ENCODE measurements at regions of chr2 and their contacts with region 1.

Region 1: DNA sequence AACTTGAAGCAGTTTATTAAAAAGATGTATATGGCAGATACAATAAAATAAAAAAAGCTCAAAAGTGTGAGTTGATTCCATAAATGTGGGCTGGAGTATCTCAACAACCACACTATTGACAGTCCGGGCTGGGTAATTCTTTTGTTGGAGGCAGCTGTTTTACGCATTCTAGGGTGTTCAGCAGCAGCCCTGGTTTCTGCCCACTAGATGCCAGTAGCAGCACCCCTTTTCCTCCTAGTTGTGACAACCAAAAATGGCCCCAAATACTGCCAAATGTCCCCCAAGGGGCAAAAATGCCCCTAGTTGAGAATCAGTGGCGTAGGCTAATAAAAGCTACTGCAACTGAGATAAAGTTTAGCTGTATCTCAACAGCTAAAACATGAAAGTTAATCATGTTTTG is 44.8 kb downstream of the CHMP3 start:
- DNase-seq: peak; percentile 50
- H3K4me3 Mint-ChIP-seq: no peak overlapping the region
- H3K27ac Mint-ChIP-seq: no peak overlapping the region
- H3K4me1 Mint-ChIP-seq: no peaks in the 10 kb centered on the region
- H3K27me3 Mint-ChIP-seq: no peaks in the 10 kb centered on the region

Region 2: DNA sequence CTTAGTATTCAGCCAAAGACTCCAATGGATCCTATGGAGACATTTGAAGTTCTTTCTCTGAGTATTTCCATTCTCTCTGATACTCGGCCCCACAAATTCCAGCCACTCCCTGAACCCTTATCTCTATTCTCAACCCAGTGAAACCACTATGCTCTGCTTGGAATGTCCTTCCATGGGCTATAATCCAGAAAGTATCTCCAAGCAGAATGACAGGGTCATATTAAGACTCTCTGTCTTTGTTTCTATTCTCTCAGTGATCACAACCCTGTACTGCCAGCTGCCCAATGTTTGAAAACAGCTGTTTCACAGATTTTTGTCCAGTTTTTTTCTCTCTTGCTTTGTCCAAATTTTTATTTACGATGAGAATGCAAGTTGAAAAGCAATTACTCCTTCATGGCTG is 22.9 kb after region 1 on chr2:
- CTCF ChIA-PET with region 1: no interaction called
- intact Hi-C with region 1: no loop called
- DNase-seq: no peak
- H3K4me3 Mint-ChIP-seq: no peak overlapping the region
- H3K27ac Mint-ChIP-seq: no peak overlapping the region
- H3K4me1 Mint-ChIP-seq: peaks cover 16% of the 10 kb centered on the region
- H3K27me3 Mint-ChIP-seq: no peaks in the 10 kb centered on the region

Region 3: GRCh38 chr2:86566158-86566820 is 47.8 kb after region 1 on chr2:
- CTCF ChIA-PET with region 1: no interaction called
- intact Hi-C with region 1: no loop called
- DNase-seq: no peak
- H3K4me3 Mint-ChIP-seq: no peak overlapping the region
- H3K27ac Mint-ChIP-seq: no peak overlapping the region
- H3K4me1 Mint-ChIP-seq: peaks cover 18% of the 10 kb centered on the region
- H3K27me3 Mint-ChIP-seq: no peaks in the 10 kb centered on the region

Region 4: DNA sequence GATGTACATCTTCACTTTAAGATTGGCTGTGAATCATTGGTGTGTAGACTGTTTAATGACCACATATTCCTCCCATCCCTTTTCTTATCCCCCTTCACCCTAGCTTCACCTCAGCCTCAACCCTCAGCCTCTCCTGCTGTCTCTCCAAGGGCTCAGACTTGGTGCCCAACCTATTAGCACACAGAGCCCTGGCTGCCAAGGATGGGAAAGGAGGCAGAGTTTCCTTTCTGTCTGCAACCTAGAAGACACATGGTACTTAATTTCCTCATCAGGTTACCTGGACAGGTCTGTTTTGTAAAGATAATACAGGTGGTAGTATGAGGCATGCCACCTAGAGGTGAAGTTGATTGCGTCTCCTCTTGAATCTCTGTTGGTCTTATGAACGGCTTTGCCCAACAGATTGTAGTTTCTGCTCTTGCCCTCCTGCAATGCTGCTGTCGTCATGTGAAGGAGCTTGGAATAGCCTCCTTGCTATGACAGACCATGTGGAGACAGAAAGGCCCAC is 157.1 kb after region 1 on chr2:
- CTCF ChIA-PET with region 1: no interaction called
- intact Hi-C with region 1: loop called (anchors 2 kb)
- DNase-seq: no peak
- H3K4me3 Mint-ChIP-seq: no peak overlapping the region
- H3K27ac Mint-ChIP-seq: no peak overlapping the region
- H3K4me1 Mint-ChIP-seq: no peaks in the 10 kb centered on the region
- H3K27me3 Mint-ChIP-seq: no peaks in the 10 kb centered on the region

Region 5: GRCh38 chr2:86686905-86687304 is 168.4 kb after region 1 on chr2:
- CTCF ChIA-PET with region 1: no interaction called
- intact Hi-C with region 1: no loop called
- DNase-seq: no peak
- H3K4me3 Mint-ChIP-seq: no peak overlapping the region
- H3K27ac Mint-ChIP-seq: no peak overlapping the region
- H3K4me1 Mint-ChIP-seq: no peaks in the 10 kb centered on the region
- H3K27me3 Mint-ChIP-seq: no peaks in the 10 kb centered on the region

Region 6: DNA sequence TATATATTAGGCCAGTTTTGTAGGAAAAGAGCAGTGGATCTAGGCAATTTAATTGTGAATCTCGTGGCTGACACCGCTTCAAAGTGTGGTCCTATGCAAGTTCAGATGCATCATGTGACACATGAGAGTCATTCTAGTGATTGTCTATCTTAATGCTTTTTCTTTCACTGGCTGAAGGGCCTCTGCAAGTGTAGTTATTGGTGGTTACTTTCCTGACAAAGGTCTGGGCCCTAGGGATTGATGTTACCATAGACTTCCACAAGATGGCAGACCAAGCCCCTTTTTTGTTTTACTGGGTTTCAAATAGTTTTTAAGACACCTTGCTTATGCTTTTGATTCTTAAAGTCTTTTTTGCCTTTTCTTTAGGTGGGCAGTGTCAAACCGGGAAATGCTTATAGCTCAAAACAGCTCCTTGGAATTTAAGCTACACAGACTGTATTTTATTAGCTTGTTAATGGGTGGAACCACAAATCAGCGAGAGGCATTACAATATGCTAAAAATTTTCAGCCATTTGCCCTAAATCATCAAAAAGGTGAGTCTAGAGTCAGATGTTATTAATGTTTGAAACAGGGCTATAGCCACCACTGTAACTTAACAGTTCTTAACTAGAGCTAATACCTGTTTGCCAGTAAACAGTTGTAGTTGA is 246.3 kb after region 1 on chr2:
- CTCF ChIA-PET with region 1: no interaction called
- intact Hi-C with region 1: loop called (anchors 10 kb)
- DNase-seq: peak; percentile 44
- H3K4me3 Mint-ChIP-seq: no peak overlapping the region
- H3K27ac Mint-ChIP-seq: no peak overlapping the region
- H3K4me1 Mint-ChIP-seq: peaks cover 19% of the 10 kb centered on the region
- H3K27me3 Mint-ChIP-seq: no peaks in the 10 kb centered on the region

Measured in activated naive CD4-positive, alpha-beta T cell treated with anti-CD3 and anti-CD28 coated beads for 36 hours (primary cell).